H1 (cell line): ENCODE measurements at regions of chr3 and their contacts with region 1.

Region 1: DNA sequence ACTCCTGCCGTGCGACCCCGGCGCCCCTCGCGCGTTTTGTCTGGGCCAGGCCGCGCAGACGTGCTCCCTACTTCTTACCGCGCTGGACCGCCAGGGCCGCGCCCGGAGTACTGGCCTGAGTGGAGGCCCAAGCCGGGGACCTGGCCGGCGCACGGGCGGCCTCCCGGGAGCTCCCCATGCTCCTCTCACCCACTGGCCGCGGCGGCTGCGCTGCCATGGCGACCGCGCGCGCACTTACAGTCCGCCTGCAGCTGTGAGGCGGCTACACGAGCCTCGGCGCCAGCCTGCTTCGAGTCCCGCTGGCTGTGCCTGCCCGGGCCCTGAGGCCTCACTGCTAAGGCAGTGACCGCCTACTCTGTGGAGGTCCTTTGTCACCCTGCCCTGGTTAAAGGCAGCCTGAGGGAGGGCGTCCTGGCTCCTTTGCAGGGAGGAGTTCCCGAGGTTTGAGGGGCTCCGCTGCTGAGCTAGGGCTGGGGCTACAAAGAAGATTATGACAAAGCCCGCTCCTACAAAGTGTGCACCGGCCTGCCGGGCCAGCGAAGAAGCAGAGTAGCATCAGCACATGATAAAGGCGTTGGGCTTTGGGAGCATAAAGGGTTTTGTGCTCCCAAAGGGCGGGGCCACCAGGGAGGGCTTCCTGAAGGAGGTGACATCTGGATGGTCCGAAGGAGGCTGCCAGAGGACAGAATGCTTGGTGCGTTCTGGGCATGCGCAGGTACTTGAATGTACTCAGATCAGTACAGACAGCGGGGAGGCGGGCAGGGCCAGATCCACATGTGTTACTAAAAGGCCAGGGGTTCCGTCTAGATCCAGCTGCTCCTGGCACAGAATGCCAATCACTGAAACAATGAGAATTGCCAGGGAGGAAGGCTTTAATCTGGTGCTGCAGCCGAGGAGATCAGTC is at the starts of genes LRRC34 and LRRIQ4:
- DNase-seq: peak; percentile 81 to 83
- H3K4me3 ChIP-seq: peak within 1 kb of the TSS; percentile 54 to 73 (median 68)
- H3K27ac ChIP-seq: no peak within 1 kb of the TSS
- H3K4me1 ChIP-seq: peaks cover 7 to 20% (median 10%) of the 10 kb centered on the region in 4 experiments; a peak in 6 of 7 replicates
- H3K27me3 ChIP-seq: peaks cover 0 to 7% (median 4%) of the 10 kb centered on the region in 4 experiments; a peak in 6 of 7 replicates
- CTCF ChIP-seq: no peak
- EP300 ChIP-seq: no peak
- POLR2A ChIP-seq: no peak; a peak in 1 of 3 replicates
- RAD21 ChIP-seq: no peak
- total RNA-seq, gene LRRC34: 3.3 and 4.6 TPM in 2 replicates
- total RNA-seq, gene LRRIQ4: not detected in 2 replicates

Region 2: DNA sequence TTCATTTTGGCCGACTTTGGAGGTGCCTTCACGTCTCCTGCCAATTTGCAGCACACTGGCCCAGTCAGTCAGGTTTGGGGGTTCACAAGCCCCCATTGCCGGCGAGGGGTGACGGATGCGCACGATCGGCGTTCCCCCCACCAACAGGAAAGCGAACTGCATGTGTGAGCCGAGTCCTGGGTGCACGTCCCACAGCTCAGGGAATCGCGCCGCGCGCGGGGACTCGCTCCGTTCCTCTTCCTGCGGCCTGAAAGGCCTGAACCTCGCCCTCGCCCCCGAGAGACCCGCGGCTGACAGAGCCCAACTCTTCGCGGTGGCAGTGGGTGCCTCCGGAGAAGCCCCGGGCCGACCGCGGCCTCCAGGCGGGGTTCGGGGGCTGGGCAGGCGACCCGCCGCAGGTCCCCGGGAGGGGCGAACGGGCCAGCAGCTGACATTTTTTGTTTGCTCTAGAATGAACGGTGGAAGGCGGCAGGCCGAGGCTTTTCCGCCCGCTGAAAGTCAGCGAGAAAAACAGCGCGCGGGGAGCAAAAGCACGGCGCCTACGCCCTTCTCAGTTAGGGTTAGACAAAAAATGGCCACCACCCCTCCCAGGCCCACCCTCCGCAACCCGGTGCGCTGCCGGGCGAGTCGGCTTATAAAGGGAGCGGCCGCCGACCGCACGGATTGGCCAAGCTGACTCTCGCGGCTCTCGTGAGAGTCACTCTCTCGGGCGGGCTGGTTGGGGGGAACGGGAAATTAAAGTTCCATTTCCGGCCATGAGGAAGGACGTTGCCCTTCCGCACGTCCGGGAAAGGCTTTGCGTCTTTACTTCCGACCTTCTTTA is 47.9 kb before region 1 on chr3 and contains the start of gene TERC:
- CTCF ChIA-PET with region 1: interaction called, 11 read pairs
- POLR2A ChIA-PET with region 1: interaction called, 3 read pairs
- DNase-seq: peak; percentile 78 to 82
- H3K4me3 ChIP-seq: peak within 1 kb of the TSS; percentile 65 to 83 (median 79)
- H3K27ac ChIP-seq: peak within 1 kb of the TSS; percentile 86
- H3K4me1 ChIP-seq: peaks cover 0 to 2% (median 0%) of the 10 kb centered on the region in 4 experiments; a peak in 3 of 7 replicates
- H3K27me3 ChIP-seq: no peaks in the 10 kb centered on the region
- CTCF ChIP-seq: no peak
- EP300 ChIP-seq: no peak
- POLR2A ChIP-seq: peak; percentile 97 to 99
- RAD21 ChIP-seq: no peak
- total RNA-seq, gene TERC: 14.0 and 17.0 TPM in 2 replicates

Region 3: DNA sequence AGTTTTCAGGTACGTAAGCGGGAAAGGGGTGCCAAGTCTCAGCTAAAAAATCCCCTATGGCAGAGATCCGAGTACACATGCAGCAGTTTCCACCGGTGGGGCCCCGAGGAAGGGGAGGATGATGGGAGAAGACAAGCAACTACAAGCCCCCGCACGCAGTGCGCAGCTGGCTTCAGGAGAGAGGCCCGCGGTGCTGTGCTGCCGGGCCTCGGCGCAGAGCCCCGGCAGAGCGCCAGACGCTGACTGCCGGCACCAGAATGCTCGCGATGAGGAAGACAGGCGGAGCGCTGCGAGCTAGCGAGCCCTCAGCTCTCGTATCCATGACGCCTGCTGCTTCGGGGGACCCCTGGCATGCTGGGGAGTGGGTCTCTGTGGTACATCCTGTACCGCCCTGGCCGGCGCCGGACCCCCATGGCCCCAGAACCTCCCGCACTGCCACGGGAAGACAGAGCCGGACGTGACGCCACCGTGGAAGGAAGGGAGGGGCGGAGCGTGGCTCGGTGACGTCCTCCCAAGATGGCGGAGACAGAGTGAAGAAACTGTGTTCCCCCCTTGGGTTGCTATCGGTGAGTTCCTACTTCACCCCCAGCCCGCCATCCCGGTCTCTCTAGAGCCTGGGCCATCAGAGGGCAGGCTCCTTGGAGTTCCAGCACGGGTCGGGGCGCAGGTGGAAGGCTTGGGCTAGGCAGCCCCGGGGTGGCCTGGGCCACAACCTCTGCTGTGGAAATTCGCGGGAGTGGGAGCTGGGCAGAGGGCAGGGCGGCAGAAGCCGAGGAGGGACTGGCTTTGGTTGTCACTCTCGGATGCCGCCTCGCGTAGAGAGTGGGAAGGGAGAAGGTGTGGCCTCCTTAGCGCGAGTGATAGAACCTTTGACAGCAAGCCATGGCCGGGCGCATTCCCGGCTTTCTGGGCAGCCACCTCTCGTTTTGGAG is 39.4 kb before region 1 on chr3 and contains the start of gene MYNN:
- CTCF ChIA-PET with region 1: interaction called, 3 read pairs
- POLR2A ChIA-PET with region 1: interaction called, 20 read pairs
- DNase-seq: peak; percentile 60 to 93
- H3K4me3 ChIP-seq: peak within 1 kb of the TSS; percentile 44 to 91 (median 91)
- H3K27ac ChIP-seq: peak within 1 kb of the TSS; percentile 96
- H3K4me1 ChIP-seq: peaks cover 0 to 3% (median 1%) of the 10 kb centered on the region in 4 experiments; a peak in 1 of 7 replicates
- H3K27me3 ChIP-seq: no peaks in the 10 kb centered on the region
- CTCF ChIP-seq: no peak
- EP300 ChIP-seq: no peak
- POLR2A ChIP-seq: peak; percentile 87 to 95
- RAD21 ChIP-seq: no peak
- total RNA-seq, gene MYNN: 13.9 and 15.2 TPM in 2 replicates